Tibial artery (tissue), 4 donors: ENCODE measurements at regions of chr12 and their contacts with region 1.

Region 1: DNA sequence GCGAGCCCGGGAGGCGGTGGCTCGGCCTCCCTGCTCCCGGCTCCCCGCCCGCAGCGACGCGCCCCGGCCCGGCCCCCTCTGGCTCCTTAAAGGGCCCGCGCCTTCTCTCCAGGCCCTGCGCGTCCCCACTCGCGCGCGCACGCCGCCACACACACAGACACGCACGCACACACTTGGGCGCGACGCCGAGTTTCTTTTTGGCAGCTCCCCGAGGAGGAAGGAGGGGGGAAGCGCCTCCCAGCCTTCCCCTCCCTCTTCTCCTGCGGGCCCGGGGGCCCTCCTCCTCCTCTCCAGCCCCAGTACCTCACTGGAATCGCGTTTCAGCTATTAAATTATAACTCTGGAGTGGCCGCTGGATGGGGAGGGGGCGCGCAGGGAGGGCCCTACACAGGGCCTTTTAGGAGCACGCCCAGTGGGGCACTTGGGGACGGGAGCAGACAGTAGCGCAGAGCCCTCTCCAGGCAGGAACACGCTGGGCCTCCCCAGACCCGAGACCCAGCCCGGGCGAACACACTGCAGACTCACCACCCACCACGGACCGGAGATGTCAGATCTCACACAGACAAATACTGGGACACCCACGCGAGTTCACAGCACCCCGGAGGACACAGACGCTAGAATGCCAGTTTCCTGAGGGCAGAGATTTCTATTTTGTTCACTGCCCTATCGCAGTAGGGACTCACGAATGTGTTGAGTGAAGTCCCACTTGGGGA is 405 bp upstream of the NCOR2 start:
- DNase-seq: peak; percentile 94 to 98
- H3K4me3 ChIP-seq: peak overlapping the region; percentile 88 to 94
- H3K27ac ChIP-seq: peak overlapping the region; percentile 79 to 87
- H3K4me1 ChIP-seq: peaks cover 8 to 57% (median 41%) of the 10 kb centered on the region in 4 donors
- H3K27me3 ChIP-seq: no peaks in the 10 kb centered on the region
- CTCF ChIP-seq: peak in 1 of 2 experiments; percentile 14

Region 2: GRCh38 chr12:124379938-124380754 is 187.7 kb before region 1 on chr12:
- intact Hi-C with region 1: loop called (anchors 5 kb)
- DNase-seq: peak; percentile 81 to 97
- H3K4me3 ChIP-seq: peak overlapping the region in 1 of 2 donors; percentile 8
- H3K27ac ChIP-seq: peak overlapping the region; percentile 77 to 86
- H3K4me1 ChIP-seq: peaks cover 17 to 58% (median 50%) of the 10 kb centered on the region in 4 donors
- H3K27me3 ChIP-seq: no peaks in the 10 kb centered on the region
- CTCF ChIP-seq: peak; percentile 65 to 68

Region 3: GRCh38 chr12:124457287-124458219 is 110.3 kb before region 1 on chr12:
- intact Hi-C with region 1: loop called (anchors 5 kb)
- DNase-seq: peak; percentile 95 to 97
- H3K4me3 ChIP-seq: peak overlapping the region; percentile 34 to 42
- H3K27ac ChIP-seq: peak overlapping the region; percentile 80 to 94
- H3K4me1 ChIP-seq: peaks cover 10 to 60% (median 49%) of the 10 kb centered on the region in 4 donors
- H3K27me3 ChIP-seq: no peaks in the 10 kb centered on the region
- CTCF ChIP-seq: peak in 1 of 2 experiments; percentile 12

Region 4: DNA sequence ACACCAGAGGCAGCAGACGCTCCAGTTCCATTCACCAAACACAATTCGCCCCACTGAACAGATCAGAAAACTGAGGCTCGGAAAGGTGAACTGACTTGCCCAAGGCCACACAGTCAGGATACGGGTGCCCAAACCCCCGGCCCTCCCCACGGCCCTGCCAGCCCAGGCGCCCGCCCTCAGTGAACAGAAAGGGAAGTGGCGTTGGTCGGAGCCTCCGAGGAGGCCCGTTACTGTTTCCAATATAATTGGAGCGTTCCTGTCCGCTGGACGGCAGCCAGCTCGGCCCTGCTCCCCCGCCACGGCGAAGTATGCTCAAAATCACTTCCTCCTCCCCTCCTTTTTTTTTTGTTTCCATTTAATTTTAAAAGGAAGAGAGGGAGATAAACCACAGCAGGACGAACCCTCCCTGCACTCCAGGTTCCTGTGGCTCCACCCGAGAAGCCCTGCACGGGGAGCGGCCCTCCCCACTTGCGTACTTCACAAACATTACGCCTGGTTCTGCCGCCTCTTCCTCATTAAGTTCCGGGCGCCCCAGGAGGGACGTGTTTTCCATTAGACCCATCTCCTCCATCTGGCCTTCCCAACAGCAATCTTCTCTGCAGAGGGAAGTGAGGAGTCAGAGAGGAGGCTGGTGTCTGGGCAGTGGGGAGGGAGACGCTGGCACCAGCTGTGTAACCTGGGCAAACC is 61.5 kb before region 1 on chr12:
- intact Hi-C with region 1: no loop called
- DNase-seq: peak; percentile 87
- H3K4me3 ChIP-seq: peak overlapping the region in 1 of 2 donors; percentile 15
- H3K27ac ChIP-seq: peak overlapping the region; percentile 50
- H3K4me1 ChIP-seq: peaks cover 6 to 85% (median 55%) of the 10 kb centered on the region in 4 donors
- H3K27me3 ChIP-seq: no peaks in the 10 kb centered on the region
- CTCF ChIP-seq: no peak

Region 5: DNA sequence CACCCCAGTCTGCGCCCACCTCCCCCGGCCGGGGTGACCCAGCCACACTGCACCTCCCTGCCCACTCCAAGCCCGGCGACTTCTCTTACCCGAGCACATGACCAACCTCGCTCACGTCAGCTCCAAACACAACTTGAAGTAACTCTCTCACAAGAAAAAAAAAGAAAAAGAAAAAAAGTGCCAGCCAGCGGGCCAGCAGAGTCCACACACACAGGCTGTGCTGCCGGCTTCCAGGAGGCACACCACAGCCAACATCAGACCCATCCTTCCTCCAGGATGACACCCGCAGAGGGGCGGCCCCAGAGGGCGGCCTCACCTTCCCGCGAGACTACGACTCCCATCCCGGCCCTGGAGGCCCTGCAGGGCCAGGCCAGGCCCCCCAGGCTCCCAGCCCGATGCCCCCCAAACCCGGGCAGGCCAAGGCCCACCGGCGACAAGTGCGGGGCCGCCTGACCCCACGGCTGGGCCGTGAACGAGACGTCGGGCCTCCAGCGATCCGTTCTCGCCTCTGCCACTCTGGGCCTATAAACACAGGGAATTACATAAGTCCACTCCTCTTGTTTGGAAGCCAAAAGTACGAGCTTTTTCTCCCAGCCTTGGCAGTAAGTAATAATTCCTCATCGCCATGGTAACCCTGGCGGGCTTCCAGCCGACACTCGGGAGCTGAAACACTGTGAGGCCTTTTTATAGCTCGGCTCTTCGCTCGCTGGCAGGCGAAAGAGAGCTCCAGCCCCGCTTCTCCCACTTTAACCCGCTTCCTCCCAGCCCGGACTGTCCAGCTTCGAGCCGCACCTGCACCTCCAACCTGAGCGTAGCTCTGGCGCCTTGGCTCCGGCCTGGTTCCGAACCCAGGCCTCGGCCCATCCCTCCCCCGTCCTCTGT is 49.5 kb before region 1 on chr12:
- intact Hi-C with region 1: loop called (anchors 2 kb)
- DNase-seq: peak; percentile 99 to 100
- H3K4me3 ChIP-seq: peak overlapping the region; percentile 50 to 64
- H3K27ac ChIP-seq: peak overlapping the region; percentile 98 to 99
- H3K4me1 ChIP-seq: peaks cover 15 to 90% (median 78%) of the 10 kb centered on the region in 4 donors
- H3K27me3 ChIP-seq: no peaks in the 10 kb centered on the region
- CTCF ChIP-seq: no peak

Region 6: GRCh38 chr12:124680863-124681778 is 113.3 kb after region 1 on chr12:
- intact Hi-C with region 1: loop called (anchors 5 kb)
- DNase-seq: peak; percentile 83 to 91
- H3K4me3 ChIP-seq: no peak overlapping the region
- H3K27ac ChIP-seq: peak overlapping the region; percentile 70
- H3K4me1 ChIP-seq: peaks cover 0 to 76% (median 58%) of the 10 kb centered on the region in 4 donors
- H3K27me3 ChIP-seq: no peaks in the 10 kb centered on the region
- CTCF ChIP-seq: peak; percentile 38 to 44

Region 7: DNA sequence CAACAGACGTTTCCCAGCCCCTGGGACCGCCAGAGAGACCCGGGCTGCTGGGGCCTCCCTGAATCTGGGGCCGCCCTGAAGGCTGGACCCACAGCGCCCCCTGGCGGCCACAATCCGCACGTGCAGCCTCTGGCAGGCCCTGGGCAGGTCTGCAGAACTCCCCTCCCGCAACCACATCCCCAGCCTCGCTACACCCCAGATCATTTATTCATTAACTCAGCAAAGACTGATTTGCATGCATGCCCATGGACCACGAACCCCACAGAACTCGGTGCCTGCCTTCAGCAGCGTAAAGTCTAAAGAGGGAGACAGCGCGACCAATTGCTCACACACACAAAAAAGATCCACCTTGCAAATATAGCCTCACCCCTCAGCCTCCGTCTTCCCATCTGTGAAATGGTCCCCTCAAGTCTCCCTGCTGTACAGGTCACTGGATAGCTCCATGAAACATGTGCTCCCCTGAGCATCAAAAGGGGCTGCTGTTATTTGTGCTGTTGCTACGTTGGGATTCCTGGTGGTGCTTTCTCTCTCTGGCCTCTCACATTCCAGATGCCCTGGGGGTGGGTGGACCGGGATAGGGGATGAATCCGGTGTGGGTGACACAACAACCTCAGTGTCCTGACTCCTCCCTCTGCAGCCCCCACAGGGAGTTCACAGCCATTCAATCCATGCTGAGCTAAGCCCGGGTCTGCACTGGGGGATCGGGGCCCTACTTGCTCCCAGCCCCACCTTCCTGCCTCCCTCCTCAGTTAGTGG is 199.4 kb after region 1 on chr12:
- intact Hi-C with region 1: loop called (anchors 5 kb)
- DNase-seq: peak; percentile 66 to 87
- H3K4me3 ChIP-seq: no peak overlapping the region
- H3K27ac ChIP-seq: peak overlapping the region in 1 of 2 donors; percentile 68
- H3K4me1 ChIP-seq: peaks cover 8 to 56% (median 47%) of the 10 kb centered on the region in 4 donors
- H3K27me3 ChIP-seq: peaks cover 0 to 4% of the 10 kb centered on the region in 2 donors
- CTCF ChIP-seq: peak; percentile 99